ENCODE measurements at regions of chr3 and their contacts with region 1.

Region 1: DNA sequence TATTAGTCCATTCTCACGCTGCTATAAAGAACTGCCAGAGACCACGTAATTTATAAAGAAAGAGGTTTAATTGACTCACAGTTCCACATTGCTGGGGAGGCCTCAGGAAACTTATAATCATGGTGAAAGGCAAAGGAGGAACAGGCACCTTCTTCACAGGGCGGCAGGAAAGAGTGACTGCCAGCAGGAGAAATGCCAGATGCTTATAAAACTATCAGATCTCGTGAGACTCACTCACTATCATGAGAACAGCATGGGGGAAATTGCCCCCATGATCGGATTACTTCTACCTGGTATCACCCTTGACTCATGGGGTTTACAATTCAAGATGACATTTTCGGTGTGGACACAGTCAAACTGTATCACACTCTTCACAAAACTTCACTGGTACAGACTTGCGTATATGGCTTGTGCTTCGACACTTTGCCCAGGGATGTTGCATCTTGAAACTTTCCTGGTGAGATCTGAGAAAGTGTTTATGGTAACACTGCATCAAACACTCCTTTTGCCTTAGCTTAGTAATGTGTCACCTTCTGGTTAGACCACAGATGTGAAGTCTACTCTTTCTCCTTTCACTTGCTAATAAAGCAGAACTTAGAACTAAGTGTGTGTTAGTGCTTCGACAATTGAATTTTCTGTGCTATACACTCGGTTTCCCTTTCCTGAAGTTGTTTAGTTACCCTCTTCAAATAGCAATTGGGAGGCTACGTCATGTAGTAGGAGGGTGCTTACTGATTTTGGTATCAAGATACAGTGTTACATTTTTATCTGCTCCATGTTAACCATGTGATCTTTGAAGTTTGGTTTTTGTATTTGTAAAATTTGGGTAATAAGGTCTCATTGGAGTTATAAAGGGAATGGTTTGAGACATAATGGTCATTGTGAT is 185.7 kb downstream of the LPP start:
- DNase-seq: peak; percentile 37 to 69
- ATAC-seq: peak; percentile 83 to 93 (median 91)
- H3K4me3 ChIP-seq: no peak overlapping the region
- H3K4me3 Mint-ChIP-seq: peak overlapping the region; percentile 79
- H3K27ac ChIP-seq: peak overlapping the region; percentile 62
- H3K27ac Mint-ChIP-seq: peak overlapping the region; percentile 82
- H3K4me1 ChIP-seq: peaks cover 7% of the 10 kb centered on the region
- H3K4me1 Mint-ChIP-seq: peaks cover 44 to 55% of the 10 kb centered on the region in 2 donors
- H3K27me3 ChIP-seq: no peaks in the 10 kb centered on the region
- H3K27me3 Mint-ChIP-seq: peaks cover 0 to 9% of the 10 kb centered on the region in 2 donors
- CTCF ChIP-seq: no peak

Region 2: DNA sequence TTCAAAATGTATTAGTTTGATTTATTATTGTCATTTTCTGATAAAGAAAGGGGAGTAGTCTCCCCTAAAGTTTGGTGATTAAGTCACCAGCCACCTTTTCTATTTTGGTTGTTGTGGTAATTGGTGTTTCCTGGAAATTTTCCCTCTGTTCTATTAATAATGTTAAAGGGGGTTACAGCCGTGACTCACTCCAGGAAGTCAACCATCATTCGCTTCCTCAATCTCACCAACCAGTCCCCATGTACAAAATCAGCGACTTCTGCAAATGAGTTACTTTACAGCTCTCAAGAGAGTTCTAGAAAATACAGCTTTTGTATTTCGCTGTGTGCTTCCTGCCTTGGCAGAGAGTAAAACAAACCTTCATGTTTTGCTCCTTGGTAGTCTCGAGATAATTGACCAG is 99.4 kb after region 1 on chr3:
- intact Hi-C with region 1: loop called (anchors 1 kb)
- DNase-seq: peak in 1 of 2 donors; percentile 67
- ATAC-seq: peak; percentile 80 to 87 (median 80)
- H3K4me3 ChIP-seq: no peak overlapping the region
- H3K4me3 Mint-ChIP-seq: peak overlapping the region; percentile 71
- H3K27ac ChIP-seq: peak overlapping the region; percentile 90
- H3K27ac Mint-ChIP-seq: peak overlapping the region; percentile 92 to 95
- H3K4me1 ChIP-seq: peaks cover 22% of the 10 kb centered on the region
- H3K4me1 Mint-ChIP-seq: peaks cover 58 to 62% of the 10 kb centered on the region in 2 donors
- H3K27me3 ChIP-seq: no peaks in the 10 kb centered on the region
- H3K27me3 Mint-ChIP-seq: no peaks in the 10 kb centered on the region
- CTCF ChIP-seq: no peak